OCI-LY7 (cell line): ENCODE measurements at regions of chr19 and their contacts with region 1.

Region 1: GRCh38 chr19:15149737-15150136 is 42.5 kb downstream of the SYDE1 start:
- DNase-seq: no peak
- H3K4me3 ChIP-seq: no peak overlapping the region
- H3K27ac ChIP-seq: no peak overlapping the region
- H3K4me1 ChIP-seq: no peaks in the 10 kb centered on the region
- CTCF ChIP-seq: no peak

Region 2: GRCh38 chr19:15091901-15092753 is 57.6 kb before region 1 on chr19:
- CTCF ChIA-PET with region 1: no interaction called
- POLR2A ChIA-PET with region 1: interaction called, 5 read pairs
- intact Hi-C with region 1: loop called (anchors 1 kb)
- DNase-seq: peak; percentile 85
- H3K4me3 ChIP-seq: no peak overlapping the region
- H3K27ac ChIP-seq: no peak overlapping the region
- H3K4me1 ChIP-seq: peaks cover 8% of the 10 kb centered on the region
- CTCF ChIP-seq: peak; percentile 83

Region 3: GRCh38 chr19:15129856-15130597 is 19.7 kb before region 1 on chr19:
- CTCF ChIA-PET with region 1: no interaction called
- POLR2A ChIA-PET with region 1: no interaction called
- intact Hi-C with region 1: no loop called
- DNase-seq: no peak
- H3K4me3 ChIP-seq: no peak overlapping the region
- H3K27ac ChIP-seq: no peak overlapping the region
- H3K4me1 ChIP-seq: peaks cover 8% of the 10 kb centered on the region
- CTCF ChIP-seq: no peak

Region 4: DNA sequence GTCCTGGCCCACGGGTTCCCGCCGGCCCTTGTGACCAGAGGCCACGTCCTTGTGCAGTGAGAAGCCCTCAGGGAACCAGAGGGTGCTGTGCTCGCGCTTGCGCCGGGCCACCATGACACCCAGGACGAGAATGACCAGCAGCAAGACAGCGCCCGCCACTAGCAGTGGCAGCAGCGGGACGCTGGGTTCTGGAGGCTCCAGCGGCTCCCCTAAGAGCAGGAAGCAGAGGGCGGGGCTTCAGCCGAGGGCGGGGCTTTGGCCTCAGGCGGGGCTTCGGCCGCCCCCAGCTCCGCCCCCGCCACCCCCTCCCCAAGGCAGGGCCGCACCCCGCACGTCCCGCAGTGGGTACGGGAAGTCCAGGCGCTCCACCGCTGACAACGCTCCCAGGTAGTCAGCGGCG is 20.6 kb after region 1 on chr19:
- CTCF ChIA-PET with region 1: no interaction called
- POLR2A ChIA-PET with region 1: no interaction called
- intact Hi-C with region 1: no loop called
- DNase-seq: no peak
- H3K4me3 ChIP-seq: no peak overlapping the region
- H3K27ac ChIP-seq: no peak overlapping the region
- H3K4me1 ChIP-seq: no peaks in the 10 kb centered on the region
- CTCF ChIP-seq: no peak

Region 5: GRCh38 chr19:15354566-15355296 is 205.0 kb after region 1 on chr19:
- CTCF ChIA-PET with region 1: no interaction called
- POLR2A ChIA-PET with region 1: no interaction called
- intact Hi-C with region 1: no loop called
- DNase-seq: no peak
- H3K4me3 ChIP-seq: no peak overlapping the region
- H3K27ac ChIP-seq: no peak overlapping the region
- H3K4me1 ChIP-seq: no peaks in the 10 kb centered on the region
- CTCF ChIP-seq: no peak